AG04449 (cell line): ENCODE measurements at regions of chr3 and their contacts with region 1.

Region 1: GRCh38 chr3:184185461-184186308 is at the start of gene ABCF3:
- DNase-seq: peak; percentile 88
- H3K4me3 ChIP-seq: peak within 1 kb of the TSS; percentile 99
- CTCF ChIP-seq: no peak

Region 2: GRCh38 chr3:184174646-184175492 is 10.8 kb before region 1 on chr3 and contains the start of gene AP2M1:
- CTCF ChIA-PET with region 1: interaction called, 4 read pairs
- POLR2A ChIA-PET with region 1: interaction called, 43 read pairs
- DNase-seq: peak; percentile 95
- H3K4me3 ChIP-seq: peak within 1 kb of the TSS; percentile 99
- CTCF ChIP-seq: no peak

Region 3: GRCh38 chr3:184196536-184196935 is 10.9 kb after region 1 on chr3:
- CTCF ChIA-PET with region 1: no interaction called
- POLR2A ChIA-PET with region 1: interaction called, 10 read pairs
- DNase-seq: no peak
- H3K4me3 ChIP-seq: no peak overlapping the region
- CTCF ChIP-seq: no peak